Breast epithelium (tissue), 4 donors: ENCODE measurements at regions of chr2 and their contacts with region 1.

Region 1: DNA sequence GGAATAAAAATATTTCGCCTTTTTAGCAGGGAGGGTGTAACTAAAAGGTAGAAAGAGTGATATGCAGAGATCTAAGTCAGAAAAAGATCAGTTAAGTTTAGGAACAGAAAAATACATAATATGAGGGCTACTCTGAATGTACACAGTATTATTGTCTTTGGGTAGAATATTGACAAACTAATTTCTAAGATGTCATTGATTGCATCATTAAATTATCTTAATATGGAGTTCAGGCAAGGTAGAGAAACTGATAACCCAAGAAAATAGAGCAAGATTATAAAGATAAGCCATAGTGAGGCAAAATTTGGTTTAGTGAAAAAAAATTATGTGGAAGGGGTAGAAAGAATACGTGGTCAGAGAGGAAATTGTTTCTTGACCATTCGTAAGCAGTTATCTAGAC is 629.0 kb upstream of the NXPH2 start:
- DNase-seq: no peak
- H3K4me3 ChIP-seq: no peak overlapping the region
- H3K27ac ChIP-seq: no peak overlapping the region
- H3K4me1 ChIP-seq: no peaks in the 10 kb centered on the region
- H3K27me3 ChIP-seq: no peaks in the 10 kb centered on the region
- CTCF ChIP-seq: no peak
- POLR2A ChIP-seq: no peak

Region 2: DNA sequence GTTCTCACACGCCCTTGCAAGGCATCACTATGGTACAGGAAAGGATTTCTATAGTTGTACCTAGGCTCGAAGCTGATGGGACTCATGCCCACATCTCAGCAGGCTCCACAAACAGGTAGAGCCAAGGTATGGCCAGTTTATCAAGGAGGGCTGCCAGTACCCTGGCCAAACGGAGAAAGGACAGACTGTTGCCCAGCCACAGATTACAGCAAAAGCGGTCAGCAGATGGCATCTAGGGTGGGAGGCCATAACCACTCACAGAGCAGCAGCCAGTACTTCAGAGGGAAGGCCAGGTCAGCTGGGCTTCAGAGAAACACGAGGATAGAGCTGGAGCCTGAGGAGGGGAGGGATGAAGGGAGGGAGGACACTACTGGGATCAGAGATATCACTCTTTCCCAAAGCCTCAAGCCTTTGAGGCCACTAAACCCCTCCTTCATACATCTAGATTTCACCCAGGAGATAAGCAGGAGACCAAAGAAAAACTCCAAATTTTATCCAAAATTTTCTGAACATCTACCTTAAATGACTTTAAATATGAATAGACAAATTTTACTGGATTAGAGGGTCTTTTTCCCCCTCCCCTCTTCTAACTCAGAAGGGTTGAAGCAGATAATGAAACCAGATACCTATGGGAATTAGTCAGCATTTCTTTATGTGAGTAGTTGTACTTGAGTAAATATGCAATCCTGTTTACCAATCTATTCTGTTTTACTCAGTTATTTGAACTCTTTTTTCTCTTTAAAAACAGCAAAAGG is 275.3 kb after region 1 on chr2:
- intact Hi-C with region 1: no loop called
- DNase-seq: no peak
- H3K4me3 ChIP-seq: no peak overlapping the region
- H3K27ac ChIP-seq: no peak overlapping the region
- H3K4me1 ChIP-seq: no peaks in the 10 kb centered on the region
- H3K27me3 ChIP-seq: no peaks in the 10 kb centered on the region
- CTCF ChIP-seq: no peak
- POLR2A ChIP-seq: no peak

Region 3: GRCh38 chr2:140718999-140719398 is 1309.8 kb after region 1 on chr2:
- intact Hi-C with region 1: loop called (anchors 5 kb)
- DNase-seq: no peak
- H3K4me3 ChIP-seq: no peak overlapping the region
- H3K27ac ChIP-seq: no peak overlapping the region
- H3K4me1 ChIP-seq: no peaks in the 10 kb centered on the region
- H3K27me3 ChIP-seq: no peaks in the 10 kb centered on the region
- CTCF ChIP-seq: no peak
- POLR2A ChIP-seq: no peak